ENCODE measurements at regions of chr22 and their contacts with region 1.

Region 1: DNA sequence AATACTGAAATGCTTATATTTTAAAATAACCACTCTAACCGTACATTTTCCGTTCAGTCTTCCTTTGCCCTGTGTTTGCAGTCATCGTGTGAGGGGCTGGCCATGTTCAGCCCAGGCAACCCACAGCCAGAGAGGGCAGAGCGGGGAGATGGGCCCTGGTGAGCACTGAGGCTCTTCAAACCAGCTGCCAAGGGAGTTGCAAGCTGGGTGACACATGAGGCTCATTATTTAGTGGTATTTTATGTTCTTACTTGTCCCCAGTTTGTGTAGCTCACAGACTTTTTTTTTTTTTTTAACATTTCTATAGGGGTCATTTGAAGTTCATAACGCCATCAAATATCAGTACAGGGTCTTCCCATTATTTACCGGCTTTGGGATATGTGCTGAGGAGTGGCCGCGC is 18.0 kb upstream of the DGCR6 start:
- DNase-seq: no peak
- ATAC-seq: no peak
- H3K4me3 ChIP-seq: no peak overlapping the region
- H3K27ac ChIP-seq: no peak overlapping the region
- H3K4me1 ChIP-seq: no peaks in the 10 kb centered on the region
- H3K27me3 ChIP-seq: no peaks in the 10 kb centered on the region
- CTCF ChIP-seq: no peak
- EP300 ChIP-seq: no peak
- POLR2A ChIP-seq: no peak
- RAD21 ChIP-seq: no peak

Region 2: GRCh38 chr22:18156850-18157713 is 731.0 kb before region 1 on chr22:
- CTCF ChIA-PET with region 1: no interaction called
- POLR2A ChIA-PET with region 1: no interaction called
- in situ Hi-C with region 1: loop called (anchors 25 kb)
- intact Hi-C with region 1: no loop called
- DNase-seq: peak; percentile 65 to 77 (median 70)
- ATAC-seq: peak; percentile 91
- H3K4me3 ChIP-seq: no peak overlapping the region
- H3K27ac ChIP-seq: no peak overlapping the region
- H3K4me1 ChIP-seq: peaks cover 0 to 7% of the 10 kb centered on the region in 2 experiments; a peak in 2 of 5 replicates
- H3K27me3 ChIP-seq: peaks cover 13 to 30% of the 10 kb centered on the region in 2 experiments; a peak in 3 of 5 replicates
- CTCF ChIP-seq: peak; percentile 86 to 90 (median 89)
- EP300 ChIP-seq: no peak
- POLR2A ChIP-seq: no peak
- RAD21 ChIP-seq: peak; percentile 42 to 89

Region 3: GRCh38 chr22:18905540-18906409 is 17.7 kb after region 1 on chr22 and contains the start of gene DGCR6:
- CTCF ChIA-PET with region 1: no interaction called
- POLR2A ChIA-PET with region 1: no interaction called
- in situ Hi-C with region 1: no loop called
- intact Hi-C with region 1: no loop called
- DNase-seq: no peak
- ATAC-seq: peak; percentile 98
- H3K4me3 ChIP-seq: no peak within 1 kb of the TSS
- H3K27ac ChIP-seq: no peak within 1 kb of the TSS
- H3K4me1 ChIP-seq: no peaks in the 10 kb centered on the region
- H3K27me3 ChIP-seq: no peaks in the 10 kb centered on the region
- CTCF ChIP-seq: no peak
- EP300 ChIP-seq: no peak
- POLR2A ChIP-seq: no peak
- RAD21 ChIP-seq: no peak
- polyA plus RNA-seq, gene DGCR6: 0.32 TPM in 1 of 2 experiments, not detected in the other

Region 4: DNA sequence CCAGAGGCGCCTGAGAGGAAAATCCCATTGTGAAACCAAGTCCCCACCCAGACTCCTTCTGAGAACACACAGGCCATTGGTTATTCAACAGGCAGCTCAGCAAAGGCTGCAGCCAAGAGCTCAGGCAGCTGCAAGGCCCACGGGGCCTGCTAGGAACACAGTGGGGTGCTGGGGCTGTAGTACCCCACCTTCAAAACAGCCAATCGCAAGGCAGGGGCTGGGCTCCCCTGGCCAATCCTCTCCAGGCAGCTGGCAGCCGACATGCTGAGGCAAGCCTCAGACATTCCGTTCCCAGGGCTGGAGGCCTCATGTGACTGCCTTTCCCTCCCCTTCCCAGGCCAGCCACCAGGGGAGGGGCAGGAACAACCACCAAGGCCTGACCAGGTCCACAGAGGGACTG is 41.3 kb after region 1 on chr22:
- CTCF ChIA-PET with region 1: no interaction called
- POLR2A ChIA-PET with region 1: no interaction called
- in situ Hi-C with region 1: no loop called
- intact Hi-C with region 1: no loop called
- DNase-seq: no peak
- ATAC-seq: peak; percentile 64
- H3K4me3 ChIP-seq: no peak overlapping the region
- H3K27ac ChIP-seq: no peak overlapping the region
- H3K4me1 ChIP-seq: no peaks in the 10 kb centered on the region
- H3K27me3 ChIP-seq: no peaks in the 10 kb centered on the region
- CTCF ChIP-seq: no peak
- EP300 ChIP-seq: no peak
- POLR2A ChIP-seq: no peak
- RAD21 ChIP-seq: no peak